PC-3 (cell line): ENCODE measurements at regions of chr1 and their contacts with region 1.

Region 1: DNA sequence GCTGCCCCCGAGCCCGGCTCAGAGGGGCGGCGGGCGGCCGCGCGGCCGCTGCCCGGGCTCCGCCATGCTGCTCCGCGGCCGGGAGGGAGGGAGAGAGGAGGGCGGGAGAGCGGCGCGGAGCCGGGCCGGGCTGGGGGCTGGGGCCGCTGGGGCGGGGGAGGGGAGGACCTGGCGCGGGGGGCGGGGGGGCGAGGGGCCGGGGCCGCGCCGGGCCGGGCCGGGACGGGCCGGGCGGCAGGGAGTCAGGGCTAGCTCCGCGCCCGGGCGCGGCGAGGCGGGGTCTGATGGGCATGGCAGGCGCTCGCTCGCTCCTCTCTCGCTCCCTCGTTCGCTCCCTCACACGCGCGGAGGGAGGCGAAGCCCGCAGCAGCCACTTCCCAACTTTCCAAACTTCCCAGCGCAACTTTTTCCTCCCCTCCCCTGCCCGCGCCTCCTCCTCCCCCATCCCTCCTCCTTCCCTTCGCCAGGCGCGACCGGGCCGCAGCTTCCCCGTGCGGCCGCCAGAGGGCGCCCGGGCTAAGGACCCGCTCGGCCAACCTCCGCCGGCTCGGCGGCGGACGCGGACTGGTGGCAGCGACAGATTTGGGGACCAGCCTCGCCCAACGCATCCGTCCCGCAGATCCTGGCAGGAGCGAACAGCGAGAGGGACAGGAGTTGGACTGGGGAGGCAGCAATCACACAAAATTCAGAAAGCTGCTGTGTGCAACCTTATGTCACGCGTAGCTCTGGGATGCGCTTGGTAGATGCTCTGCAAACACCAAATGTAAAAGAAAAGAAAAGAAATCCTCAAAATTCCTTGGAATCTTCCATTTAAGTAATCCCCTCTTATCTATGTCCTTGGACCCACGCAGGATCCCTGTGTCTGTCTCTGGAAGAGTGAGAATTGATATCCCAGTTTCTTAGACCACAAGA is at the start of gene TRABD2B:
- DNase-seq: peak; percentile 84
- ATAC-seq: peak; percentile 68
- H3K4me3 ChIP-seq: peak within 1 kb of the TSS; percentile 74
- H3K27ac ChIP-seq: no peak within 1 kb of the TSS
- H3K4me1 ChIP-seq: peaks cover 18% of the 10 kb centered on the region
- H3K27me3 ChIP-seq: no peaks in the 10 kb centered on the region
- CTCF ChIP-seq: peak; percentile 90
- total RNA-seq, gene TRABD2B: 0.44 and 0.63 TPM in 2 replicates

Region 2: DNA sequence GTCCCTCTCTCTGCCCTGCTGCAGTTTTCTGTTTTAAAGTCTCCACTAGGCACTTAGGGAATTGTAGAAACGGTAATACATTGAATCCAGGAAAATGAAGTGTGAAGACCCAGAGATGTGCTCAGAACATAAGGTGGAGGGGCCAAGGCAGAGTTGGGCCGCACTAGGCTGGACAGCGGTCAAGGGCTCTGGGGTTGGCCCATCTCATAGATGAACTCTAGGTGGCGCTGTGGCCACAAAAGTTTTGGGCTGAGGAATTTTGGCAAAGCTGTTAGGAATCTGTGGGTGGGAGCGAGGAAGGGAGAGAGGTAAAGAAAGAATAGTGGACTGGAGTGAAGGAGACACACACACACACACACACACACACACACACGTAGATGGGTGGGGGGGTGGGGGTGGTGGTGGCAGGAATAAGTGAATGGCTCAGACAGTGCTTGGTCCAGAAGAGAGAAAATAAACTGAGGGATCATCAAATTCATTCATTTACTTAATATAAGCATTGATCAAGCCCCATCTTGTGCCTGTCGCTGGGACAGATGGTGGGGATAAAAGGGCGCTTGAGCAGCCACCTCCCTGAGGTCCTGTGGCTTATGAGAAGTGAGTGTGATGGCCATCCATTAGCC is 258.9 kb before region 1 on chr1:
- CTCF ChIA-PET with region 1: interaction called, 4 read pairs
- POLR2A ChIA-PET with region 1: no interaction called
- intact Hi-C with region 1: loop called (anchors 5 kb)
- DNase-seq: peak; percentile 79
- ATAC-seq: peak; percentile 94
- H3K4me3 ChIP-seq: no peak overlapping the region
- H3K27ac ChIP-seq: no peak overlapping the region
- H3K4me1 ChIP-seq: no peaks in the 10 kb centered on the region
- H3K27me3 ChIP-seq: peaks cover 6% of the 10 kb centered on the region; the same call in 1 of the 2 replicates
- CTCF ChIP-seq: peak; percentile 76

Region 3: DNA sequence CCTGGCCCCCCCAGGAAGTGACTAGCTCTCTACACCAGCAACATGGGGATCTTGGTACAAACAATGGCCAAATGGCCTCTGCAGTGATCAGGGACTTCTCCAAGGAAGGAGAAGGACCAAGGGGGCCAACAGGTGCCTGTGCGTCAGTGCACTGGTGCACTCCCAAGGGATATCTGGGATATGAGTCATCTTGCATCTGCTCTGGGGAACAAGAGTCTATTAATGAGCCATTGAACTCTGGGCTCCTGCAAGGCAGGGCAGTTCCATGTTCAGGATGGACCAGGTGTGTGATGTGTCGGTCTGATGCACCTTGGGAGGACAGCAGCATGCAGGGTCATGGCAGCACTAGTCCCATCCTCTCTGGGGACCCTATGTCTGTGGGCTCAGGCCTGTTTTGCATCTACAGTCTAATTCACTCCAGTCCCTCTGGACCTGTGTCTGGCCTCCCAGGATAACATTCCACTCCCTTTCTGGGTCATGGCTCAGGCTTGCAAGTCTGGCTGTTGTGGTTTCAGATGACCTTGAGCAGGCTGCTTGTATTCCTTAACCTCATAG is 125.7 kb before region 1 on chr1:
- CTCF ChIA-PET with region 1: interaction called, 11 read pairs
- POLR2A ChIA-PET with region 1: no interaction called
- intact Hi-C with region 1: no loop called
- DNase-seq: peak; percentile 89
- ATAC-seq: peak; percentile 70
- H3K4me3 ChIP-seq: no peak overlapping the region
- H3K27ac ChIP-seq: peak overlapping the region; percentile 94
- H3K4me1 ChIP-seq: peaks cover 57% of the 10 kb centered on the region
- H3K27me3 ChIP-seq: no peaks in the 10 kb centered on the region
- CTCF ChIP-seq: no peak

Region 4: DNA sequence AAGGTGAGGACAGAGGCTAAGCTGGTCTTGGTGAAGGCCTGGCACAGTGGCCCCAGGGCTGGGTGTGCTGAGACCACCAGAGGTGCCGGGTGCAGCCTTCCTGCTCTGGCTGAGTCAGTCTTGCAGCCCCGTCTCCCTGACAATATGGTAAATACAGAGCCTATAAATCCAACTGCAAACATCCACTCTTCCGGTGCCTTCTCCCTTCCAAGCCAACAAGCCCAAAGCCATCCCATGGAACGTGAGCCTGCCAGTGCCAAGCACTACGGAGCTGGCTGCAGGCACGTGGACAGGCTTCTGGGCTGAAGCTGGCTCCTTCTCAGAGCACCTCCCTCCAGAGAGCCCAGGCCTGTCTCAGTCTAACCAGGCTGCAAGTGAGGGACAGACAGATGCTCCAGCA is 70.4 kb before region 1 on chr1:
- CTCF ChIA-PET with region 1: no interaction called
- POLR2A ChIA-PET with region 1: no interaction called
- intact Hi-C with region 1: loop called (anchors 1 kb)
- DNase-seq: peak; percentile 94
- ATAC-seq: peak; percentile 76
- H3K4me3 ChIP-seq: no peak overlapping the region
- H3K27ac ChIP-seq: peak overlapping the region; percentile 89
- H3K4me1 ChIP-seq: peaks cover 39% of the 10 kb centered on the region
- H3K27me3 ChIP-seq: no peaks in the 10 kb centered on the region
- CTCF ChIP-seq: no peak

Region 5: GRCh38 chr1:48082271-48082962 is 84.9 kb after region 1 on chr1:
- CTCF ChIA-PET with region 1: no interaction called
- POLR2A ChIA-PET with region 1: no interaction called
- intact Hi-C with region 1: no loop called
- DNase-seq: no peak
- ATAC-seq: no peak
- H3K4me3 ChIP-seq: no peak overlapping the region
- H3K27ac ChIP-seq: no peak overlapping the region
- H3K4me1 ChIP-seq: no peaks in the 10 kb centered on the region
- H3K27me3 ChIP-seq: peaks cover 35% of the 10 kb centered on the region
- CTCF ChIP-seq: no peak